Common myeloid progenitor, CD34-positive (primary cell): ENCODE measurements at regions of chr6 and their contacts with region 1.

Region 1: DNA sequence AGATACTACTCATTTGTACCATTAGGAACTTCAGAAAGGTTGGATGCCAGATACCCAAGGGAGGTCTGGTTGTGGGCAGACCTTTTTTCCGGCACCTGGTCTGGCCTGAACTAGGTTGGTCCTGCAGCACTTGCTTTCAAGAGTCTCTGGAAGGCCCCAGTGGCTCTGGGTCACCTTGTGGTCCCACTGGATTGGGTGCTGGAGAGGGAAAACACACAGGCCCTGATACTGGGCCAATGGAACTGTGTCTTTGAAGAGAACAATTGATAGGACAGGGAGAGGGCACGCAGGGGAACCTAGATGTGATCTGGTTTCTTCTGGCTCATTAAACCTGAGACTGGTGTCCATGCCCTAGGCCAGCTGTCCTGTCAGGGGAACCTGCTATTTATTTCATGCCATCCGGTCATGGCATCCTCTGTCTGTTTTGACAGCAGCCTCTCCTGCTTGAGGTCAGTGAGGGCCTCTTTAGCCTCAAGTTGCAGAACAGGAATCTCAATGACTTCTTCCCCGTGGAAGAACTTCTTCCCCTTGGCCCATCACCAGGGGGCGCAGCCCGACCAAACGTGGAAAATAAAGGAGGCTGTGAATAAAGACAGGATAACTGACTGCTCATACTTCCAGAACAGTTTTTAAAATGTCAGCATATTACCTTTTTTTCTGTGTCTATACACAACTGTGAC is 25.0 kb downstream of the TAF8 start:
- DNase-seq: peak; percentile 60 to 78 (median 68)
- H3K4me3 ChIP-seq: no peak overlapping the region
- H3K27ac ChIP-seq: no peak overlapping the region
- H3K4me1 ChIP-seq: no peaks in the 10 kb centered on the region
- H3K27me3 ChIP-seq: no peaks in the 10 kb centered on the region

Region 2: GRCh38 chr6:41763470-41763869 is 311.8 kb before region 1 on chr6:
- CTCF ChIA-PET with region 1: no interaction called
- POLR2A ChIA-PET with region 1: no interaction called
- DNase-seq: peak in 2 of 3 donors; percentile 76 to 80
- H3K4me3 ChIP-seq: no peak overlapping the region
- H3K27ac ChIP-seq: no peak overlapping the region
- H3K4me1 ChIP-seq: peaks cover 6 to 36% (median 25%) of the 10 kb centered on the region in 4 experiments
- H3K27me3 ChIP-seq: no peaks in the 10 kb centered on the region

Region 3: GRCh38 chr6:42166444-42167141 is 91.3 kb after region 1 on chr6:
- CTCF ChIA-PET with region 1: interaction called, 29 read pairs
- POLR2A ChIA-PET with region 1: no interaction called
- DNase-seq: peak; percentile 65 to 82 (median 70)
- H3K4me3 ChIP-seq: no peak overlapping the region
- H3K27ac ChIP-seq: no peak overlapping the region
- H3K4me1 ChIP-seq: no peaks in the 10 kb centered on the region
- H3K27me3 ChIP-seq: no peaks in the 10 kb centered on the region

Region 4: DNA sequence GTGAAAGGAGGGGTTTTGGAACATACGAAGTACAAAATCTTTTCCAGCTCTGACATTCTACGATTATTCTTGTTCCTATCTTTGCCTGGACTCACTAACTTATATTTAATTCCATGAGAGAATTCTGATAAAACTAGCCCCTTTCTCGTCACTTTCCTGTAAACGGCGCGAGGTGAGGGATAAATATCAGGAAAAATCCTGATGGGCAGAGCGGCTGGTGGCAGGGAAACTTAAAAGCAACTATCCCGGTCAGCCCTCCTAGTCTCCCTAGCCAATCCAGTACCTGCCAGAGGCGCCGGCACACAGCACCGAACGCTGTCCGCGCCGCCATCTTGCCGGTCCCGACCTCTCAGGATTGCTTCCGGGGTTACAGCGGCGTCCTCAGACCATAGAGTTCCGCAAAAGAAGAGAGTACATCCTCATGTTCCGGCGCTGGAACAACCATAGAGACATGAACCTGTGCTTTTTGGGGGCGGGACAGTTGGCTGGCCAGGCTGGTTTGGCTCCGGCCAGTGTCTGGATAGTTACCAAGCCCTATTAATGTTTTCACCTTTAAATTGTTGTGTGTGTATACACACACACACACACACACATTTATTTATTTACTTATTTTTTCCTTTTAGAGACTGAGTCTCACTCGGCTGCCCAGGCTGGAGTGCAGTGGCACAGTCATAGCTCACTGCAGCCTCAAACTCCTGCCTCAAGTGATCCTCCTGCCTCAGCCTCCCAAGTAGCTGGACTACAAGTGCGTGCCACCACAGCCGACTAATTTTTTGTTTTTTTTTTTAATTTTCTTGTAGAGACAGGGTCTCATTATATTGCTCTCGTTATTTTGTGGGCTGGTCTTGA is 142.4 kb after region 1 on chr6 and contains the start of gene MRPS10:
- CTCF ChIA-PET with region 1: interaction called, 13 read pairs
- POLR2A ChIA-PET with region 1: no interaction called
- DNase-seq: peak; percentile 95 to 96 (median 96)
- H3K4me3 ChIP-seq: peak within 1 kb of the TSS; percentile 56 to 100 (median 98)
- H3K27ac ChIP-seq: peak within 1 kb of the TSS; percentile 86 to 92
- H3K4me1 ChIP-seq: peaks cover 4 to 16% (median 8%) of the 10 kb centered on the region in 4 experiments
- H3K27me3 ChIP-seq: no peaks in the 10 kb centered on the region